ENCODE measurements at regions of chr1 and their contacts with region 1.

Region 1: DNA sequence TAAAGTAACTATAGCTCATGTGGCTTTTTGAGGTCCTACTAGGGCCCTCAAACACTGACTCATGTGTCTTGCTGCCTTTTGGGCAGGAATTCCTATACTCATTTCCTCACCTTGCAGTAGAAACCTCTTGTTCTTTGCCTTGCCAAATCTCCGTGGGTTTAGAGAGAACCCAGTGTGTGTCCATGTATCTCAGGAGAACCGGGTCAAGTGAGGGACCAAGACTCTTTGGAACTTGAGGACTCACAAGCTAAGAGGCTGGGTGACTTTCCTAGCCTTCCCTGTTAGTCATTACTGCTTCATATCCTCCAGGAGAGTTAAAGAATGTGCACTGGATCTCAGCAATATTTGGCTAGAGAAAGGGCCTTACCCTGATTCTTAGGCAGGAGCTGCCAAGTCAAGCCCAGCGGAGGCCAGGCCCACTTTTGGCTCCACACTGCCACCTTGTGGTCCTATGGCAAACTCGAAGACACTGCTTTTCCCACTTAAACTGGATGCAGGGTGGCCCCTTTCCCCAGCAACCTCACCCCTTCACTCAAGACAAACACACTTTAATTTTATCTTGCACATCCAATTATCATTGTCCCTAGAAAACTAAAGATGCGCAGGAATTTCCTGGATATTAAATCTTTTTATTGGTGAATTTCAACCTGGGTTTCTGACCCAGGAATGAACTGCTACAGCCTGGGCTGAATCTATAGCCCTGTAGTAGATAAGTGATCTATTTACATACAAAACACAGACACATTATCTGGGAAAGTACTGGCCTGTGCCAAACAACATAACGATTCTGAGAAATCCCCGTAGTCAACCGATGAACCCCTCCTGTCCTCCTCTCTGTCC is 10.6 kb downstream of the AVPR1B start:
- DNase-seq: peak in 1 of 2 donors; percentile 90
- H3K4me3 ChIP-seq: no peak overlapping the region
- H3K27ac ChIP-seq: no peak overlapping the region
- H3K4me1 ChIP-seq: no peaks in the 10 kb centered on the region
- H3K27me3 ChIP-seq: no peaks in the 10 kb centered on the region
- CTCF ChIP-seq: peak; percentile 62 to 86 (median 76)
- POLR2A ChIP-seq: no peak

Region 2: DNA sequence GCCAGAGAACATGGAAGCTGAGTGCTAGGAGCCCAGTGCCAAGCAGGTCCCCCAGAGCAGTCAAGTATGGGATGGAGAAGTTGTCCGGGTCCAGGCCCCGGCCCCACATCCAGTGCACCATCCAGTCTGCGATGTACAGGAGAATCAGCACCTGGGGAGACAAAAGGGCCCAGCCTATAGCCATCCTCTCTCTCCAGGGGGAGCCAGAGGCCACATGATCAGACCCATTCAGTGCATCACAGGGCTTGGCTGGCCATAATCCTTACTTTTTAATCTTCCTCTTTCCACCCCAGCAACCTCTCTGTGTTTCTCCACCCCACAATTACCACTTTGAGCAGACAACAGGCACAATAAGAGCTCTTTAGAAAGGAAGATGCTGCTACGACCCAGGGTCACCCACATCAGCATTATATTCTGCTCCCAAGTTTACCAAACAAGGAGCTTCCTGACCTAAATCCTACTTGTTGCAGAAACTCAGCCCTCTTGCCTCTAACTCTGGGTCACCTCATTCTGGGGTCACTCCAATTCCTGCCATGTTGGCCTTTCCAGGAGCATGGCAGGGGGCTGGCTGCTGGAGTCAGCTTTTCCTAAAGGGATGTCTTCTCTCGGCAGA is 314.9 kb before region 1 on chr1:
- intact Hi-C with region 1: loop called (anchors 10 kb)
- DNase-seq: no peak
- H3K4me3 ChIP-seq: no peak overlapping the region
- H3K27ac ChIP-seq: no peak overlapping the region
- H3K4me1 ChIP-seq: no peaks in the 10 kb centered on the region
- H3K27me3 ChIP-seq: no peaks in the 10 kb centered on the region
- CTCF ChIP-seq: peak; percentile 58 to 66 (median 62)
- POLR2A ChIP-seq: no peak

Region 3: GRCh38 chr1:205983925-205984725 is 122.4 kb before region 1 on chr1:
- intact Hi-C with region 1: loop called (anchors 10 kb)
- DNase-seq: no peak
- H3K4me3 ChIP-seq: no peak overlapping the region
- H3K27ac ChIP-seq: peak overlapping the region; percentile 19
- H3K4me1 ChIP-seq: peaks cover 13% of the 10 kb centered on the region
- H3K27me3 ChIP-seq: no peaks in the 10 kb centered on the region
- CTCF ChIP-seq: peak; percentile 24 to 53 (median 44)
- POLR2A ChIP-seq: no peak

Region 4: GRCh38 chr1:206012086-206012859 is 94.3 kb before region 1 on chr1:
- intact Hi-C with region 1: no loop called
- DNase-seq: no peak
- H3K4me3 ChIP-seq: no peak overlapping the region
- H3K27ac ChIP-seq: no peak overlapping the region
- H3K4me1 ChIP-seq: no peaks in the 10 kb centered on the region
- H3K27me3 ChIP-seq: no peaks in the 10 kb centered on the region
- CTCF ChIP-seq: no peak
- POLR2A ChIP-seq: no peak

Measured in vagina (tissue), 2 donors.